BJ (cell line): ENCODE measurements at regions of chr21 and their contacts with region 1.

Region 1: DNA sequence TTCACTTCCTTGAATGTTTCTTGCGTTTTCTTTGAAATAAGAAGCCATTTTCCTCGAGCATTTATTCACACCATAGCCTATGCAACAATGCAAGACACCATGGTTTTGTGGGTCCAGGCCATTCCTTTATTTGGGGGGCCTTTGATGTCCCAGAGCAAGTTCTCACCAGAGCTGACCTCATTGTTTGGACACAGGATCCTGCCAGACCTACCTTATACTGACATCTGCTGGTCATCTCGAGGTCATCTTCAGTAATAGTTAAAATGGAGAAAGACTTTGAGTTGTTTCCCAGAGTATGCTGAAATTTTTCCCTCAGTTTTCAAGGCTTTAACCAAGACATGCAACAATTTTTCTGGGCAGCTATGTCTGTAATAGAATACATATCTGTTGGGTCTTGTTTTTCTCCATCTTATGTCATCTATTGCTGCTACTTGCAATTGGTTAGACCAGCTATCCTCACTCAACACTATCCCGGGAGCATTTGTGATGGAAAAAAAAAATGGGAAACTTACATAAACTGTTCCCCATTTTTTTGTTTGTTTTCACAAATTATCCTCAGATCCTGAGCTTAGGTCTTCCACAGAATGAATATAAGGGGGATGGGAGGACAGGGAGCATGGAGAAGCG is 34.0 kb upstream of the BACE2 start:
- DNase-seq: no peak
- H3K4me3 ChIP-seq: no peak overlapping the region
- H3K27me3 ChIP-seq: peaks cover 2% of the 10 kb centered on the region
- CTCF ChIP-seq: peak; percentile 67

Region 2: DNA sequence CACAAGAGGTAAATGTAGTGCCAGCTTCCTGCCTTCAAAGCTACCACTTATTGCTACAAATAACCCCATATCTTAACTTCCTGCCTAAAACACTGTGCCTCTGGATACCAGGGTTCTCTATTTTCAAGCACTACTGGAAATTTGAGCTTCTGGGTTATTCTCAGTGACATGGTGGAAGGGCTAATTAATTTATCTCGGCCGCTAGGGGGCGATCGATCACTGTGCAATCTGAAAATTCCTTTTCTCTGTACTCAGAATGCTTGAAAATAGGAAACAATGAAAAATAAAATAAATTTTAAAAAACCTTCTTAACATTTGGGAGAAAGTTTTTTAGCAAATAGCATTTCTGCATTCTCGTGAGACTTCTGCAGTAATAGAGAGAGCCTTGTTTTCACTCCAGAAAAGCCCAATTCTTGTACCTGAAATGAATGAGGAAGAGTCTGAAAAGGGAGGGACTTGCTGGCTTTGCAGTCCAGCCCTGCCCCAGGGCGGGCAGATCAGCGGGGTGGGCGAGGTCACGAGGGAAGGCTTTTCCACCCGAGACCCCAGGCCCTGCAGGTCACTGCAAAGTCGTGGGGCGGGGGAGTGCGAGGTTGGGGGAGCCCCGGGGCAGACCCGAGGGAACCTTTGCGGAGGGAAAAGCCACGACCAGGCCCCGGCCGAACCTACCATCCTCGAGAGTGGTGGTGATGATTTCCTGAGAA is 990.0 kb before region 1 on chr21:
- CTCF ChIA-PET with region 1: interaction called, 11 read pairs
- POLR2A ChIA-PET with region 1: no interaction called
- DNase-seq: no peak
- H3K4me3 ChIP-seq: no peak overlapping the region
- H3K27me3 ChIP-seq: no peaks in the 10 kb centered on the region
- CTCF ChIP-seq: peak; percentile 56

Region 3: DNA sequence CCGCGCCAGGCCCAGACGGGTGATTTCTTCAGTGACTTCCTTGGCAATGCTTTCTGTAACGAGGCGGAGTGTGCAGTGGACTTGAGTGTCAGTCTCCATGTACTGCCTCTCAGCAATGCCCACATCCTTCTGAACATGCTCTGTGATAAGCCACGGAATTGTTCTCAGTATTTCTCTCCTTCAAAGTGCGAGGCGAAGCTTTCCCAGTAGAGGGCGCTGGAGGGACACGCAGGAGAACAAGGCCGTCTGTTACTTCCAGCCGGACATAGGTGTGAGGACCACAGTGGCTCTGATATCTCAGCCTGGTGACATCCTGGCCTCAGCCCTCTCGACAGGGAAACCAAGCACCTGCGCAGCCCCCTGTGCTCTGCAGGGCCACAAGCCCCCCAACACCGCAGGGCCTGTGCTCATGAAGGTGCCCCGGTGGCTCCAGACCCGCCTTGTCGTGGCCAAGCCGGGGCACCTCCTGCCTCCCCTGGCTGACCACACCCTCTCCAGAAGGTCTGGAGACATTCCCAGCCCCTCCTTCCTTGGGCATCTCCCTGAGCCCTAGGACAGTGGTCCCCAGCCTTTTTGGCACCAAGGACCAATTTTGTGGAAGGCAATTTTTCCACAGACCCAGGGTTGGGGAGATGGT is 12.1 kb before region 1 on chr21:
- CTCF ChIA-PET with region 1: interaction called, 49 read pairs
- POLR2A ChIA-PET with region 1: no interaction called
- DNase-seq: peak; percentile 32
- H3K4me3 ChIP-seq: no peak overlapping the region
- H3K27me3 ChIP-seq: peaks cover 4% of the 10 kb centered on the region; the same call in 1 of the 2 replicates
- CTCF ChIP-seq: peak; percentile 95

Region 4: DNA sequence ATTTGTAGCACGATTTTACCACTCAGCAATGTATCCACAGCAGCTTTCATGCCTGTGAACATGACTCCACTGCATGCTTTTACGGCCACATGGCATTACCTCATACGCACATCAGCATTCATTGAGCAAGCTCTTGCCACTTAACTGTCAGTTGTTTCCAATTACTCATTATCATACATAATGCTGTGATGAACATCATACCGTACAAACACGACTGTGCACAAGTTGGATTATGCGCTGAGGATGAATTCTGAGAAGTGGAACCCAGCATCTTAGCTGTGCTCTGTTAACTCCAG is 946.7 kb after region 1 on chr21:
- CTCF ChIA-PET with region 1: no interaction called
- POLR2A ChIA-PET with region 1: no interaction called
- DNase-seq: peak; percentile 86
- H3K4me3 ChIP-seq: no peak overlapping the region
- H3K27me3 ChIP-seq: no peaks in the 10 kb centered on the region
- CTCF ChIP-seq: no peak